Posterior cingulate gyrus (tissue), 11 donors: ENCODE measurements at regions of chr17 and their contacts with region 1.

Region 1: DNA sequence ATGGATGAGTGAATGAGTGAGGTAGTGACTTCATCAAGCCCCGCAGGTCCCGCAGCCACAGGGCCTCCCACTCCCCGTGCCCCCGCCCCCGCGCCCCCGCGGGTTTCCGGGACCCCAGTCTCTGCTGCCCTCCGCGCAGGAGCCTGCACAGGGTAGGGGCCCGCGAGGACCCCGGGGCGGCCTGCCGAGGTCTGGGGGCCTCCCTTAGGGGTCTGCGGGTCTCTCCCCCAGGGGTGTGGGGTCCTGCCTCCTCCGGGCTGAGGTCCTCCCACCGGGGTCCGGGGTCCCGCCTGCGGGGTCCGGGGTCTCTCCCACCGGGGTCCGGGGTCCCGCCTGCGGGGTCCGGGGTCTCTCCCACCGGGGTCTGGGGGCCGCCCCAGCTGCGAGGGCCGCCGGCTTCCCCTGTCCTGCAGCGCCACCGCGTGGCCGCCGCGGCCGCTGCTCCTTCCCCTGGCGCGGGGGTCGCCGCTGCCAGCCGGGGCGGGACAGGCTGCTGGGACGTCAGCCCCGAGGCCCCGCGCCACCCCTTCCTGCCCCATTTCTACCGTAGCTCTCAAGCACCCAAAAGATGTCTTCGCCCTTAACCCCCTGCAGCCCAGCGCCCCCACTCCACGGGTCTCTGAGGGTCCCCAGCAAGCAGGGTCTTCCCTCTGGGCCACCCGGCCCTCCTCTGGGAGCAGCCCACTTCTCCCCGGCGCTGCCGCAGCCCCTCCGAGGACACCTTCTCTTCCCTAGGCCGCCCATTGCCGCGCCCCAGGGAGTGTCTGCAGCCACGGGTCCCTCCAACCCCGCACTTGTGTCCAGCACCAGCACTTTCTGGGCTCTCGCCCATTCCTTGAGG is 10.4 kb upstream of the CHMP6 start:
- DNase-seq: no peak

Region 2: DNA sequence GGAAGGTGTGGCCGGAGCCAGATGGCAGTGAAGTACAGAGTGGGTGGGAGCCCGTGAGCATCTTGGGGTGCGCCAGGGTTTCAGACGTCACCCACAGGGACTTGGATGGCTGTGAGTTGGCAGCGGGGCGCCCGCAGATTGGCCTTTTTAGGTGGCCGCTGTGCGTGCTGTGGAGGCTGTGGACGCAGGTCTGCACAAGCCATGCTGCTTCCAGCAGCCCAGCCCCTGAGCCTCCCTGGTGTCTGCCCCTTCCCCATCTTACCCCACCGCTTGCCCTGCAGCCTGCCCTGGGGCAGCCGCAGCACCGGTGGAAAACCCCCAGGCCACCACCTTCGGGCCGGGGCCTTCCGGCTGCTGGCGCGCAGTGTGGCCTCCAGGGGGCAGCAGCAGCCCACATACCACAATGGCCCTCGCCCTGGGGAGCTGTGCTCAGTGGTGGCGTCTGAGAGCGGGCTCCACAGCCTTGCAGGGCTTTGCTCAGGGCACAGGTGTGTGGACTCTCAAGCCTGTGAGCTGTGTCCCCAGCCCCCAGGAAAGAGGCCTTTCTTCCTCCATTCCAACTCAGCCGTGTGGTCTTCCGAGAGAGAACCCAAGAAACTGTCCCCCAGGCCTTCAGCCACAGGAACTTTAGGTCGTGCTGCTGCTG is 554.5 kb before region 1 on chr17:
- intact Hi-C with region 1: loop called (anchors 1 kb)
- DNase-seq: peak in 9 of 10 donors; percentile 71 to 97 (median 80)

Region 3: GRCh38 chr17:80817321-80818251 is 163.7 kb before region 1 on chr17:
- intact Hi-C with region 1: no loop called
- DNase-seq: peak in 3 of 10 donors; percentile 57 to 76 (median 69)